ENCODE measurements at regions of chr1 and their contacts with region 1.

Region 1: GRCh38 chr1:3491291-3492246 is 37.1 kb downstream of the ARHGEF16 start:
- DNase-seq: peak; percentile 46 to 95 (median 78)
- ATAC-seq: peak; percentile 92
- H3K4me3 ChIP-seq: no peak overlapping the region
- H3K27ac ChIP-seq: no peak overlapping the region
- H3K4me1 ChIP-seq: peaks cover 0 to 11% of the 10 kb centered on the region in 2 donors
- H3K27me3 ChIP-seq: no peaks in the 10 kb centered on the region
- CTCF ChIP-seq: peak; percentile 100

Region 2: DNA sequence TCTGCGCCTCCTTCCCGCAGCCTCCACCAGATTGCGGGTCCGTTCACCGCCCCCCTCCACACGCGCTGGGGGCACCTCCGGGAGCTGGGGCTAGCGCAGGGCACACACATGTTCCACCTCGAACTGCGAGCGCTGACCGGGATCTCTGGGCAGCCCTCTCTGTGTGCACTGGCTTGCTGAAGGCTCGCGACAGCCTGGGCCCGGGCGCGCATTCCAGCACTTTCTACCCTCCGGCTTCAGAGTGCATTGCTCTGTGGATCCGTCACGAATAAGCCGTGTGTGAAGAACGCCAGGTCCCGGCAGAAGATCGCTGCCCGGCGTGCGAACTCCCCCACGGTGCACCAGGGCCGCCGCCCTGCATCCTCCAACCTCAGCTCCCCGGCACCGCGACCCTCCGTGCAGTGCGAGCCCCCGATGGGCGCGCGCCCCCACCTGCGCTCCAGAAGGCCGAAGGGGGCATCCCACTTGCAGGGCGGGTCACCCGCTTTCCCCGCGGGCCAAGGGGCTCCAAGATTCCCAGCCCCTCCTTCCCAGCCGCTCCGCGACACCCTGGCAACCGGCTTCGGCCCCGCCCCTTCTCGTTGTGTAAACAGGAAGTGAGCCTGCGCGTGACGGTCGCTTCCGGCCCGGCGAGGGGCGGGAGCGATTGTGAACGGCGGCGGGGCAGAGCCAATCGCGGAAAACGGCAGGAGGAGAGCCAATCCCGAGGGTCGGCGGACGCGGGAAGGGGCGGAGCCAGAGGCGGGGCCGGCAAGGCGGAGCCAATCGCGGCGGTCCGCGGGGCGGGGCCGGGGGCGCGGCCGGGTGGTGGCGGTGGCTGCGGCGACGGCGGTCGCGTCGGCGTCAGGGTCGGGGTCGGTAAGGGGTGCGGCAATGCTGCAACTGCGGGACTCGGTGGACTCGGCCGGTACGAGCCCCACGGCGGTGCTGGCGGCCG is 132.9 kb after region 1 on chr1 and contains the start of gene TPRG1L:
- intact Hi-C with region 1: loop called in 1 of 2 experiments (anchors 10 kb)
- DNase-seq: peak; percentile 95 to 99 (median 98)
- ATAC-seq: peak; percentile 98
- H3K4me3 ChIP-seq: peak within 1 kb of the TSS; percentile 93 to 99
- H3K27ac ChIP-seq: peak within 1 kb of the TSS; percentile 78 to 80
- H3K4me1 ChIP-seq: peaks cover 17 to 39% of the 10 kb centered on the region in 2 donors
- H3K27me3 ChIP-seq: no peaks in the 10 kb centered on the region
- CTCF ChIP-seq: no peak
- polyA plus RNA-seq, gene TPRG1L: 27.3 to 33.8 (median 30.4) TPM